GM12878 (cell line): ENCODE measurements at regions of chr12 and their contacts with region 1.

Region 1: DNA sequence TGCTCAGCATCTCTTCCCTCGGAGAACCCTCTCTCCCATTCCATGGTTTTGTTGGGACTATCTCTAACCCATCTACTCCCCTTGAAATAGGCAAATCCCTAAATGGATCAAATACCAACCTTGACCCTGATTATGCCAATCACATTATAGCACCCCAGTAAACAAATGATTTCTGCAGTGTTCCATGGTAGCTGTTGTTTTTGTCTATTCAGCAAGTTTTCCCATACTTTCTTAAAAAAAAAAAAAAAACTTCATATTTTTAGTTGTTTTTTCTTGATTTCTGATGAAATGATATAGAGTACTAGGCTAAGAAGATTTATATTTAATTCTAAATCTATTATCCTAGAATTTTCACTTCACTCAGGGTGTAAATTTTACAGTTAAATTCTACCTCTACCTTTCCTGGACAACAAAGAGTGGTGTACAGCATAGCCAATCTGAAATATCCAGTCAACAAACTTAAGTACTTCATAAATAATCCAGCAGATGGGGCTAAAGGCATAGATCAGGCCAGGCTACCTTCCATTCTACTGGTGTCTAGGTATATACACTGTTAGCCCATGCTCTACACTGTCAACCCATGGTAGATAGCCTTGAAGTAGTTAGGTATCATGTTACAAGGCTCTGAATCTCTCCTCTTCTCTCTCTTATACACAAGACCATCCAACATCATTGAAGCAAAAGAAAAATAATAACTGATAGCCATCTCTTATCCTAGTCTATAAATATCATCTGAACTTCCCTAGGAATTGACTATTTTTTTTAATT is 82.2 kb downstream of the PLEKHG7 start:
- DNase-seq: peak; percentile 70
- ATAC-seq: peak; percentile 99
- H3K4me3 ChIP-seq: no peak overlapping the region
- H3K27ac ChIP-seq: no peak overlapping the region
- H3K4me1 ChIP-seq: peaks cover 2% of the 10 kb centered on the region; the same call in 1 of the 2 replicates
- H3K27me3 ChIP-seq: no peaks in the 10 kb centered on the region
- CTCF ChIP-seq: peak; percentile 51 to 84 (median 57); a peak in 5 of 6 replicates
- EP300 ChIP-seq: no peak
- POLR2A ChIP-seq: no peak
- RAD21 ChIP-seq: peak; percentile 97

Region 2: DNA sequence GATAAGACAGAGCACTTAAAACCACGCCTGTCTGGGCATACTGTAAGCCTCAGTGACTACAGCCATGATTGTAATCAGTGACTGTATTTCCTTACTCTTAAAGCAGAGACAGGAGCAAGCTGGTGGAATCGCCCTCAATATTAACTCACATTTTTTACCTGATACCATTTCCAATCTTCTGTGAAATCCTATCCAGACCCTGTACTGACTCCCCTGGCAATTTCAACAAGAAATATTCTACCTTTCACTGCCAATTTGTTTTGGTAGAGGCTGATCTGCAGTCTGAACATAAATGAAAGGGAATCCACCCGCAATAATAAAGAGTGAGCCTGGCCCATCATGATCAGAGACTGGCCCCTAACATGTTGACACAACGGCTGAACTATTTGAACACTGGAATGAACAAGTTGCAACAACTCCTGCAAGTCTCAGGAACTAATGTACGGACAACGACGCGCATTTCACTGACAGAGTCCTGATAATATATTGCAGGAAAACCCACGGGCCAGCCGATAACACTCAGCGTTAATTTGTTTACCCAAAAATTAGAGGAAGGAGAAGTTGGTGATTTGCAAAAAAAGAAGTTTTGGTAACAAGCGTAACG is 443.8 kb before region 1 on chr12:
- CTCF ChIA-PET with region 1: no interaction called
- POLR2A ChIA-PET with region 1: no interaction called
- RAD21 ChIA-PET with region 1: no interaction called
- SMC1A ChIA-PET with region 1: no interaction called
- in situ Hi-C with region 1: no loop called
- intact Hi-C with region 1: no loop called
- DNase-seq: no peak
- ATAC-seq: peak; percentile 86
- H3K4me3 ChIP-seq: peak overlapping the region; percentile 46; the same call in 1 of the 2 replicates
- H3K27ac ChIP-seq: no peak overlapping the region
- H3K4me1 ChIP-seq: no peaks in the 10 kb centered on the region
- H3K27me3 ChIP-seq: no peaks in the 10 kb centered on the region
- CTCF ChIP-seq: no peak
- EP300 ChIP-seq: no peak
- POLR2A ChIP-seq: no peak
- RAD21 ChIP-seq: no peak

Region 3: DNA sequence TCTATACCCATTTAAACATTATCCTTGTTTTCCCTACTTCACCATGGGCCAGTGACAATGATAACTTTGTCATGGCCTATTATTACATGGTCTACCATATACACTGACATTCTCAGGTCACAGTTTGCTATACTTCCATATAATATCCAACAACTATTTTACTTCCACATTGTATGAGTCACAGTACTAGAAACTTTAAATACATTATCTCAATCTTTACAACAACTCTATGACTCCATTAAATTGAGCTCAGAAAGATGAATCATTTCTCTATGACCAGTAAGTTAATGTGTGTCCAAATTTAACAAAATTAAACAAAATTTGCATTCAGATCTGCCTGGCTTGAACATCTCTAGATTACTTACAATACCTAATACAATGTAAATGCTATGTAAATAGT is 11.7 kb after region 1 on chr12:
- CTCF ChIA-PET with region 1: interaction called, 11 read pairs
- POLR2A ChIA-PET with region 1: interaction called, 3 read pairs
- RAD21 ChIA-PET with region 1: interaction called, 3 read pairs
- SMC1A ChIA-PET with region 1: interaction called, 13 read pairs
- in situ Hi-C with region 1: no loop called
- intact Hi-C with region 1: no loop called
- DNase-seq: no peak
- ATAC-seq: no peak
- H3K4me3 ChIP-seq: no peak overlapping the region
- H3K27ac ChIP-seq: no peak overlapping the region
- H3K4me1 ChIP-seq: no peaks in the 10 kb centered on the region
- H3K27me3 ChIP-seq: no peaks in the 10 kb centered on the region
- CTCF ChIP-seq: no peak
- EP300 ChIP-seq: no peak
- POLR2A ChIP-seq: no peak
- RAD21 ChIP-seq: no peak

Region 4: GRCh38 chr12:92827836-92828431 is 43.0 kb after region 1 on chr12:
- CTCF ChIA-PET with region 1: interaction called, 11 read pairs
- POLR2A ChIA-PET with region 1: interaction called, 3 read pairs
- RAD21 ChIA-PET with region 1: interaction called, 5 read pairs
- SMC1A ChIA-PET with region 1: interaction called, 13 read pairs
- in situ Hi-C with region 1: no loop called
- intact Hi-C with region 1: no loop called
- DNase-seq: peak; percentile 12
- ATAC-seq: peak; percentile 81
- H3K4me3 ChIP-seq: no peak overlapping the region
- H3K27ac ChIP-seq: no peak overlapping the region
- H3K4me1 ChIP-seq: no peaks in the 10 kb centered on the region
- H3K27me3 ChIP-seq: no peaks in the 10 kb centered on the region
- CTCF ChIP-seq: peak; percentile 65 to 81 (median 81)
- EP300 ChIP-seq: no peak
- POLR2A ChIP-seq: no peak
- RAD21 ChIP-seq: peak; percentile 67

Region 5: GRCh38 chr12:93387780-93388179 is 602.8 kb after region 1 on chr12:
- CTCF ChIA-PET with region 1: interaction called, 3 read pairs
- POLR2A ChIA-PET with region 1: no interaction called
- RAD21 ChIA-PET with region 1: interaction called, 3 read pairs
- SMC1A ChIA-PET with region 1: interaction called, 10 read pairs
- in situ Hi-C with region 1: no loop called
- intact Hi-C with region 1: loop called (anchors 2 kb)
- DNase-seq: no peak
- ATAC-seq: peak; percentile 76
- H3K4me3 ChIP-seq: peak overlapping the region; percentile 6
- H3K27ac ChIP-seq: peak overlapping the region; percentile 35; the same call in 1 of the 2 replicates
- H3K4me1 ChIP-seq: peaks cover 27% of the 10 kb centered on the region
- H3K27me3 ChIP-seq: no peaks in the 10 kb centered on the region
- CTCF ChIP-seq: no peak
- EP300 ChIP-seq: no peak
- POLR2A ChIP-seq: no peak
- RAD21 ChIP-seq: no peak

Region 6: DNA sequence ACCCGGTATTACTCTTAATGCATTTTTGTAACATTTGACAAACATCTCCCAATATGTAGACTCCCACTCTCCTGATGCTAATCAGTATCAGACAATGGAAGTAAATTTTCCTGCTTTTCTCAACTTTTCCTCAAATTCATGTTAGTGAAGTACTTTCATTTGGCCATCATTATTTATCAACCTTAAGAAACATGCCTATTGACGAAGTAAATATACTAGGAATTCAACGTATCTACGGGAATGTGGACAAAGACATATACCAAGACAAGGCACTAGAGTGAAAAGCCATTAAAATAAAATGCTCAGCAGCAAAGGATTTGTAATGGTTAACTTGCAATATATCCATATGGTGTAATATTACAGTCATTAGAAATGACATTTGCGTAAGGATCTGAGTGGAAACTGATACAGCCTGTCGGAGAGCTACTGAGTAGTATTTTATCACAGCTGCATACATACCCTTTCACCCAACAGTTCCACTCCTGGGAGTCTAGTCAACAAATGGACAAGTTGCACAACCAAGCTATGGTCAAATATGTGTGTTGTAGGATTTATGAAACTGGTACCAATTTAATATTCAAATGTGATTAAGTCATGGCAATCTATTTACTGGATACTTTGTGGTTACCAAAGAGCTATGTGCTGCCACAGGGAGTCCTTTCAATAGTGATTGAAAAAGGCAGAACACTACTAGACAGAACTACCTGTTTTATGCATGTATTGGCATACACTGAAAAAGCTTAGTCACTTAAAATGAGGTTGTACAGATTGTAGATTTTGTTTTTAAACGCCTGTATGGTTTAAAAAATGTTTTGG is 619.2 kb after region 1 on chr12:
- CTCF ChIA-PET with region 1: no interaction called
- POLR2A ChIA-PET with region 1: no interaction called
- RAD21 ChIA-PET with region 1: no interaction called
- SMC1A ChIA-PET with region 1: no interaction called
- in situ Hi-C with region 1: loop called (anchors 5 kb)
- intact Hi-C with region 1: no loop called
- DNase-seq: no peak
- ATAC-seq: peak; percentile 14; the same call in 1 of the 3 replicates
- H3K4me3 ChIP-seq: no peak overlapping the region
- H3K27ac ChIP-seq: no peak overlapping the region
- H3K4me1 ChIP-seq: no peaks in the 10 kb centered on the region
- H3K27me3 ChIP-seq: no peaks in the 10 kb centered on the region
- CTCF ChIP-seq: no peak
- EP300 ChIP-seq: no peak
- POLR2A ChIP-seq: peak; percentile 47; the same call in 1 of the 2 replicates
- RAD21 ChIP-seq: no peak